Panc1 (cell line): ENCODE measurements at regions of chr6 and their contacts with region 1.

Region 1: GRCh38 chr6:90703336-90703735 is 116.5 kb upstream of the MAP3K7 start:
- DNase-seq: no peak
- ATAC-seq: no peak
- H3K4me3 ChIP-seq: no peak overlapping the region
- H3K27ac ChIP-seq: no peak overlapping the region
- H3K4me1 ChIP-seq: no peaks in the 10 kb centered on the region
- H3K27me3 ChIP-seq: no peaks in the 10 kb centered on the region; the same call in 1 of the 2 replicates
- CTCF ChIP-seq: no peak

Region 2: DNA sequence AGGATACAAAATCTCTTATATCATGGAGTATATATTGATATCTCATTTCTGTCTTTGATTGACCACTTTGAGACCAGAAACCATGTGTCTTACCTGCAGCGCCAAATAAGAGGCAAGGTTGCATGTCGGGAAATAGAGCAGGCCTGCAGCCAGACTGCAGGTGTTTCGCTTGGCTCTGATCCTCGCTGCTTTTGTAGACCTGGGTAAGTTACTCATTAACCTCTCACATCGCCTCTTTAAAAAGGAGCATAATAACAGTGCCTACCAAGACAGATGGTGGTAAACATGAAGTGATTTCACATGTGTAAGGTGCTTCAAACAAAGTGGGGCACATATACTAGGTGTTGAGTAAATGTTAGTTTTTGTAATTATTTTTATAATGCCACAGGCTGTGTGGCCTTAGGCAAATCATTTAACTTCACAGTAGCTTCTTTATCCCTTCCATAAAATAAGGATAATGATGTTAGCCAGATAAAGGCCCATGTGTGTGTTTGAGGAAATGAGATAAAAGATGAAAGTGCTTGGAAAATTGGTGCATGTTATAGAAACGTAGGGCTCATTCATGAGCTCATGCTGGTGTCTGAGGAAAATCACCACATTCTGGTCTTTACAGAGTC is 132.4 kb after region 1 on chr6:
- CTCF ChIA-PET with region 1: no interaction called
- POLR2A ChIA-PET with region 1: interaction called, 12 read pairs
- in situ Hi-C with region 1: no loop called
- intact Hi-C with region 1: no loop called
- DNase-seq: no peak
- ATAC-seq: no peak
- H3K4me3 ChIP-seq: no peak overlapping the region
- H3K27ac ChIP-seq: no peak overlapping the region
- H3K4me1 ChIP-seq: no peaks in the 10 kb centered on the region
- H3K27me3 ChIP-seq: no peaks in the 10 kb centered on the region
- CTCF ChIP-seq: no peak

Region 3: DNA sequence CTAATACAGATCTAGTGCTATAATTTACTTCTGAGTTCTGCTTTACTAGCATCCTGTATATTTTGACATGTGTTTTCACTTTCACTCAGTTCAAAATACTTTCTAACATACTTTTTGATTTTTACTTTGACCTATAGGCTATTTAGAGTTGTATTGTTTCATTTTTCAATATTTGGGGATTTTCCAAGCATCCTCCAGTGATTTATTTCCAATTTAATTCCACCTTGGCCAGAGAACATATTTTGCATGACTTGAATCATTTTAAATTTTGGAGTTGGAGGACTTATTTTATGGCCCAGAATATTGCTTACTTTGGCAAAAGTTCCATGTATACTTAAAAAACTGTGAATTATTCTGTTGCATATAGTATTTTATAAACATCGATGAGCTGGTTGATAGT is 1099.1 kb after region 1 on chr6:
- CTCF ChIA-PET with region 1: no interaction called
- POLR2A ChIA-PET with region 1: no interaction called
- in situ Hi-C with region 1: no loop called
- intact Hi-C with region 1: no loop called
- DNase-seq: no peak
- ATAC-seq: no peak
- H3K4me3 ChIP-seq: no peak overlapping the region
- H3K27ac ChIP-seq: no peak overlapping the region
- H3K4me1 ChIP-seq: no peaks in the 10 kb centered on the region
- H3K27me3 ChIP-seq: no peaks in the 10 kb centered on the region
- CTCF ChIP-seq: no peak